ENCODE measurements at regions of chr21 and their contacts with region 1.

Region 1: DNA sequence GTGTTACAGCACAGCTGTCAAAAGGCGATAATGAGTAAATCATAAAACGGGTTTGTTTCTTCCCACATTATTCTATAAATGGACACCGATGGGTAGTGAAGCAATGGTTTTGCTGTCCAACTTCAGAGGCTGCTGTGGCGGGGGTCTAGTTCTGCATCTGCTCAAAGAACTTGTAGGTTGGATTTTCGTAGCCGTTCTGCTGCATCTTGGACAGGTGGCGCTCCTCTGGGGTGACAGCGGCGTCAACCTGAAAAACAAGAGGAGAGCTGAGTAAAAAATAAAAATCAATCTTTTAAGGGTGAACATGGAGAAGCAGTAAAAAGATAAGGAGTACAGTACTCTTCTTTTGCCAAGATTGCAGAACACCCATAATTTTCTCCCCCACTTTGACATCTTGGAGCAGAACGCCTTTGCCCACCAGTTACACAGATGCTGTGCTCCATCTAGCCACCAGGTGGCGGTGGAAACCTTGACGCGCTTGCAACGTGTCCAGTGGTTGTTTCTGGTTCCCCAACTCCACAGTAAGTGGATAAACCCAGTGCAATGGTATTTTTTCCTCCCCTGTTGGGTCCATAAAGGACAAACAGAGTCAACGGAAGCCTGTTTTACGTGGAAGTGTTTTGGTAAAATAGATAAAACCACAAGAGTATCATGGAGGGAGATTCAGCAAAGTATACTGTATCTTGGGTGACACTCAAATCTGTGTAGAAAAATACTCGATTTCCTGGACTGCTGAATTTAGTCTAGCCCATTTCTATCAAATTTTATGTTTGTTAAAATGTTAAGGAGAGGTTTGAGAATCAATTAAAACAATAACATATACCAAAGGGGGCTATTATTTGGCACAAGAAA is 147.0 kb downstream of the GABPA start:
- DNase-seq: peak; percentile 44 to 52 (median 50)
- H3K4me3 ChIP-seq: no peak overlapping the region
- H3K4me3 Mint-ChIP-seq: no peak overlapping the region
- H3K27ac ChIP-seq: no peak overlapping the region
- H3K27ac Mint-ChIP-seq: peak overlapping the region in 1 of 7 donors; percentile 60
- H3K4me1 ChIP-seq: no peaks in the 10 kb centered on the region
- H3K4me1 Mint-ChIP-seq: no peaks in the 10 kb centered on the region
- H3K27me3 ChIP-seq: no peaks in the 10 kb centered on the region
- H3K27me3 Mint-ChIP-seq: no peaks in the 10 kb centered on the region
- CTCF ChIP-seq: peak; percentile 94

Region 2: GRCh38 chr21:25801217-25802014 is 80.3 kb before region 1 on chr21:
- intact Hi-C with region 1: no loop called
- DNase-seq: peak; percentile 76 to 85 (median 85)
- H3K4me3 ChIP-seq: peak overlapping the region in 1 of 3 experiments; percentile 30
- H3K4me3 Mint-ChIP-seq: peak overlapping the region in 1 of 2 donors; percentile 65
- H3K27ac ChIP-seq: no peak overlapping the region
- H3K27ac Mint-ChIP-seq: peak overlapping the region in 1 of 7 donors; percentile 20
- H3K4me1 ChIP-seq: peaks cover 3 to 6% of the 10 kb centered on the region in 2 donors
- H3K4me1 Mint-ChIP-seq: peaks cover 7% of the 10 kb centered on the region
- H3K27me3 ChIP-seq: no peaks in the 10 kb centered on the region
- H3K27me3 Mint-ChIP-seq: peaks cover 2 to 7% (median 6%) of the 10 kb centered on the region in 3 donors
- CTCF ChIP-seq: peak; percentile 100

Region 3: DNA sequence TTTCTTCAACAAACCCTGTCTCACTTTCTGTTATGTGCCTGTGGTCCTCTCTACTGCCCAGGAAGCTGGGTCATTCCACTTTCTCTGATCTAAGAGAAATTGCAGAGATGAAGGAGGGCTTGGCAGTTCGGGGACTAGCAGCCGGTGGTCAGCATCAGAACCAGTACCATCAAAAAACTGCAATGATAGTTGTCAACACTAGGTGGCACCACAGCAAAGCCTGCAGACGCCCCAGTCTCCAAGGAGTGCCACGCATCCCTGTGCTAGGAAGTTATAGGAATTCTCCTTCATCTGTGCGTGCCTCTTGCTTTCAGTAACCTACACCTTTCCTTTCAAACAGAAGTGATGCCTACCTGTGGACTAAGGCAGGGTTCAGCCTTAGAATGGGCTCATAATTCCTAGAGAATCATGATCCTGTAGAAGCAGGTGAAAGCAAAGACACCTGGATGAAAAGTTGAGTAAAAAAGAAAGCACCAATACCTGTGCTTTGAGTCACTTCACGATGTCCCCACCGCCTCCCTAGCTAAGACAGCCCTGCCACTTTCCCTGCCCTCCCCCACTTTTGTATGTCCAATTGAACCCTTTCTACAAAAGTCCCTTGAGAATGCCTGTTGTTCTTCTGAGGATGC is 834.2 kb after region 1 on chr21:
- intact Hi-C with region 1: loop called in 1 of 2 experiments (anchors 5 kb)
- DNase-seq: peak; percentile 2 to 28 (median 25)
- H3K4me3 ChIP-seq: no peak overlapping the region
- H3K4me3 Mint-ChIP-seq: no peak overlapping the region
- H3K27ac ChIP-seq: no peak overlapping the region
- H3K27ac Mint-ChIP-seq: no peak overlapping the region
- H3K4me1 ChIP-seq: no peaks in the 10 kb centered on the region
- H3K4me1 Mint-ChIP-seq: no peaks in the 10 kb centered on the region
- H3K27me3 ChIP-seq: no peaks in the 10 kb centered on the region
- H3K27me3 Mint-ChIP-seq: peaks cover 0 to 1% (median 1%) of the 10 kb centered on the region in 3 donors
- CTCF ChIP-seq: peak; percentile 77